ENCODE measurements at regions of chr4 and their contacts with region 1.

Region 1: DNA sequence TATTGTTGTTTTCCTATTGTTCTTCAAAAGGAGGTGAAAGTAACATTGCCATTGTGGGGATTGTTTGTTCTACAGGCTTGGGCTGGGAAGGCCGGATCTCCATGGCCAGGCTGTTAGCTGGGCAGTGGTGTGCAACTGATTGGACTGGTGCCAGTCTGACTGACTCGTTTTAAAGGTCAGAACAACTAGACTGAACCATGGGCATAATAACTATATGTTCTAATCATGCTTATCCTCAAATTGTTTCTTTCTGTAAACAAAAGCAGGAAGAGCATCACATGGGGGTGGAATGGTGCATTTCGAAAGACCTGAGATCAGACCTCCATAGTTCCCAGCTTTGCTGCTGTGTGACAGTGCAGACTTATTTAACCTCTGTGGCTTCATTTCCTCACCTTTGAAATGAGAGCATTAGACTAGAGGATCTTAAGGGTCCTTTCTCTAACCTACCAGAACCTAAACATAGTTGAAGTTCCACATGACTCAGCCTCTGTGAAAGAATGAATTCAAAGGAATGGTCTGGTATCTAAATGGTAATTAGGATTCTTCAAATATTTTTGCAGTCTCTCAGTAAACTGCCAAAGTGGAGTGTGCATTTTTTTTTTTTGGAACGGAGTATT is 66.7 kb upstream of the PGRMC2 start:
- DNase-seq: peak; percentile 92
- H3K4me3 ChIP-seq: no peak overlapping the region
- H3K27ac ChIP-seq: peak overlapping the region; percentile 86
- H3K4me1 ChIP-seq: peaks cover 34% of the 10 kb centered on the region
- H3K27me3 ChIP-seq: no peaks in the 10 kb centered on the region
- CTCF ChIP-seq: no peak
- POLR2A ChIP-seq: no peak

Region 2: GRCh38 chr4:127771535-127772275 is 582.6 kb before region 1 on chr4:
- CTCF ChIA-PET with region 1: no interaction called
- POLR2A ChIA-PET with region 1: no interaction called
- dilution Hi-C with region 1: no loop called
- intact Hi-C with region 1: loop called (anchors 2 kb)
- DNase-seq: no peak
- H3K4me3 ChIP-seq: no peak overlapping the region
- H3K27ac ChIP-seq: no peak overlapping the region
- H3K4me1 ChIP-seq: no peaks in the 10 kb centered on the region
- H3K27me3 ChIP-seq: no peaks in the 10 kb centered on the region
- CTCF ChIP-seq: no peak
- POLR2A ChIP-seq: no peak

Region 3: DNA sequence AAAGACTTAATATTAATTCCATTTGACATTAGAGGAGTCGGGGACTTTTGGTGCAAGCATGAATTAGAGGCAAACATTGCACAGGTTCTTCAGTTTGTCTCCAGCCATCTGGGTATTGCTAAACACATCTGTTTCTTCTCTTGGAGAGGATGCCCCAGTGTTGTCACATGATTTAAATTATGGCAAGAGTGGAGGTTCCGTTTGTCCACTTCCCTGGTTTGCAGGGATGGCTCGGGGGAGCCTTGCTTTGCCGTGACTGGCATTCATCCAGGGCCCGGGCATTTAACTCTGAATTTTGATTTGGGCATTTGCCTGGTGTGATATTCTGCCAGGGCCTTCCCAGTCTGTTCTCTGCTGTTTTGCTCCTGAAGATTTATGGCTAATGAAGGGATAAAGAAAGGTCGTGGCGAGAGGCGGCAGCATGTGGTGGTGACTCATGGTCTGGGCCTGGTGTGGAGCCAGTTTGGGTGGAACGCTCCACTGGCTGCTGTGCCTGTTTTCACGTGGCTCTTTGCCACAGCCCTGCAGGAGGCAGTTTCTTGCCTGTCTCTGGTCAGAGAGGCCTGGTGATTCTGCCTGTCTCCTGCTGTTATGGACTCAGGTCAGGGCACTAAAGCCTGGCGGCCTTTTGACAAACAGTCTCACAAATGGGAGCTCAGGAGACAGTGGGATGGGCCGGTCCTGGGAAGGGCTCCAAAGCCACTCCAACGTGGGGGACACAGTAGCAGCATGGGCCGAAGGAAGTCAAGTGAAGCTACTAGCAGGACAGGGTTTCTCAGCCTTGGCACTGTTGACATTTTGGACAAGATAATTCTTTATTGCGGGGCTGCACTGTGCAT is 32.7 kb after region 1 on chr4:
- CTCF ChIA-PET with region 1: no interaction called
- POLR2A ChIA-PET with region 1: no interaction called
- dilution Hi-C with region 1: no loop called
- intact Hi-C with region 1: loop called (anchors 2 kb)
- DNase-seq: peak; percentile 94
- H3K4me3 ChIP-seq: no peak overlapping the region
- H3K27ac ChIP-seq: peak overlapping the region; percentile 34
- H3K4me1 ChIP-seq: peaks cover 15% of the 10 kb centered on the region
- H3K27me3 ChIP-seq: no peaks in the 10 kb centered on the region
- CTCF ChIP-seq: no peak
- POLR2A ChIP-seq: no peak

Region 4: GRCh38 chr4:128863312-128864075 is 509.2 kb after region 1 on chr4:
- CTCF ChIA-PET with region 1: no interaction called
- POLR2A ChIA-PET with region 1: no interaction called
- dilution Hi-C with region 1: no loop called
- intact Hi-C with region 1: no loop called
- DNase-seq: peak; percentile 81
- H3K4me3 ChIP-seq: no peak overlapping the region
- H3K27ac ChIP-seq: no peak overlapping the region
- H3K4me1 ChIP-seq: peaks cover 11% of the 10 kb centered on the region
- H3K27me3 ChIP-seq: no peaks in the 10 kb centered on the region
- CTCF ChIP-seq: peak; percentile 78 to 83
- POLR2A ChIP-seq: no peak